WTC11 (cell line): ENCODE measurements at regions of chr3 and their contacts with region 1.

Region 1: GRCh38 chr3:49454458-49454857 is 15.6 kb upstream of the DAG1 start:
- DNase-seq: peak; percentile 76
- ATAC-seq: peak; percentile 92
- H3K4me3 Mint-ChIP-seq: no peak overlapping the region
- H3K27ac Mint-ChIP-seq: no peak overlapping the region
- H3K4me1 Mint-ChIP-seq: peaks cover 25% of the 10 kb centered on the region
- H3K27me3 Mint-ChIP-seq: no peaks in the 10 kb centered on the region
- CTCF ChIP-seq: no peak

Region 2: GRCh38 chr3:49171119-49171774 is 283.2 kb before region 1 on chr3 and contains the start of gene KLHDC8B:
- CTCF ChIA-PET with region 1: interaction called, 16 read pairs
- POLR2A ChIA-PET with region 1: interaction called, 6 read pairs
- DNase-seq: peak; percentile 96
- ATAC-seq: peak; percentile 85
- H3K4me3 Mint-ChIP-seq: peak within 1 kb of the TSS; percentile 82
- H3K27ac Mint-ChIP-seq: peak within 1 kb of the TSS; percentile 64
- H3K4me1 Mint-ChIP-seq: peaks cover 26% of the 10 kb centered on the region
- H3K27me3 Mint-ChIP-seq: peaks cover 20% of the 10 kb centered on the region
- CTCF ChIP-seq: peak; percentile 96
- total RNA-seq, gene KLHDC8B: 13.5 to 21.5 TPM (median 16.1 TPM) in 3 replicates

Region 3: GRCh38 chr3:49411968-49412631 is 42.4 kb before region 1 on chr3 and contains the starts of genes RHOA and TCTA:
- CTCF ChIA-PET with region 1: interaction called, 27 read pairs
- POLR2A ChIA-PET with region 1: no interaction called
- DNase-seq: peak; percentile 96
- ATAC-seq: peak; percentile 86
- H3K4me3 Mint-ChIP-seq: peak within 1 kb of the TSS; percentile 97
- H3K27ac Mint-ChIP-seq: peak within 1 kb of the TSS; percentile 98
- H3K4me1 Mint-ChIP-seq: peaks cover 41% of the 10 kb centered on the region
- H3K27me3 Mint-ChIP-seq: no peaks in the 10 kb centered on the region
- CTCF ChIP-seq: no peak
- total RNA-seq, gene RHOA: 367 to 398 TPM (median 389 TPM) in 3 replicates
- total RNA-seq, gene TCTA: 10.1 to 11.9 TPM (median 11.5 TPM) in 3 replicates

Region 4: DNA sequence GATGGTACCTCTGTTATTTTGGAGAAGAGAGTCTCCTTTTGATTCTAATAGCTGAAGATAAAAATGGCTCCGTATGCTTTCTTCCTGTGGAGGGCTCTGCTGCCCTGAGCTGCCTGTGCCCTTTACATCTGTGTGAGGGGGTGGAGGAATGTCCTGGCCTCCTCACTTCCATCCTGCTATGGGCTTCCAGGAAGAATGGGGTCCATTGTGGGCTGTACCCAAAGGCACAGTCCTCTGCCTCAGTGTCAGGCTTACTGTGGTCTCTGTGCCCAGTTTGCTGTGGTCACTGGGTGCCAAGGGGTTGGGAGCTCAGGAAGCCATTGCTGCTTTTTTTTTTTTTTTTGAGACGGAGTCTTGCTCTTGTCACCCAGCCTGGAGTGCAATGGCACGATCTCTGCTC is 30.0 kb after region 1 on chr3:
- CTCF ChIA-PET with region 1: interaction called, 15 read pairs
- POLR2A ChIA-PET with region 1: interaction called, 3 read pairs
- DNase-seq: no peak
- ATAC-seq: peak; percentile 33; the same call in 1 of the 2 replicates
- H3K4me3 Mint-ChIP-seq: no peak overlapping the region
- H3K27ac Mint-ChIP-seq: peak overlapping the region; percentile 78; the same call in 1 of the 2 replicates
- H3K4me1 Mint-ChIP-seq: peaks cover 18% of the 10 kb centered on the region
- H3K27me3 Mint-ChIP-seq: no peaks in the 10 kb centered on the region
- CTCF ChIP-seq: no peak

Region 5: GRCh38 chr3:49523756-49524747 is 69.6 kb after region 1 on chr3:
- CTCF ChIA-PET with region 1: interaction called, 12 read pairs
- POLR2A ChIA-PET with region 1: no interaction called
- DNase-seq: no peak
- ATAC-seq: no peak
- H3K4me3 Mint-ChIP-seq: no peak overlapping the region
- H3K27ac Mint-ChIP-seq: peak overlapping the region; percentile 85
- H3K4me1 Mint-ChIP-seq: 0 out of 2 replicates have a peak, but pooled peaks cover 6% of the 10 kb centered on the region
- H3K27me3 Mint-ChIP-seq: no peaks in the 10 kb centered on the region
- CTCF ChIP-seq: no peak

Region 6: DNA sequence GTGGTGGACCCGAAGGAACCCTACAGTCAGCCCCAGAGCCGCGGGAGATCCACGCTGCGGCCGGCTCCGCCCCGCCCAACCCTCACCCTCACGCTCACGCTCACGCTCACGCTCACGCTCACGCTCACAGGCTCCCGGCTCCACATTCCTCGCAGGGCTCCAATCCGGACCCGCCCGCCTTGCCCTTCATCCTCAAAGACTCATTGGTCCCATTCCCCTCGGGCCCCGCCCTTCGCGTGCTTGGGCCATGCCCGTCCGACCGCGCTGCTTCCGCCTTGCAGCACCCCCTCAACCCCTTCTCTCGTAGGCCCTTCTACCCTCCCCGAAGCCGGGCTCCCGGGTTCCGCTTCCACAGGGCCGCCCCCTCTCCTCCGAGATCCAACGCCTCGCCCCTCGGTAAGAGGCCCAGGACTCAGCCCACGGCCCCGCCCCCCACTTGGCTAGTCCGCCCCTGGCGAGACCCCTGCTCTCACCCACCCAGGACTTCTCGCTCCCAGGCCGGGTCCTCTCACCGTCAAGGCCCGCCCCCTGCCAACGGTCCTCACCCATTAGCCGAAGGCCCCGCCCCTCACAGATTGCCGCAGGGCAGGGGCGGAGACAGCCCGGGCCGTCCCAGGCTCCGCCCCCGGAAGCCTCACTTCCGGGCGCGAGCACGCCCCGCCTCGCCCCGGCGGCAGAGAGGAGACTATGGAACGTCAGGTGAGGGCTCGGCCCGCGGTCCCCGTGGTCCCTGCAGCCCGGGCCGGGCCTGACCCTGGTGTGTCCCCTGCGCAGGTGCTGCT is 219.4 kb after region 1 on chr3 and contains the start of gene APEH:
- CTCF ChIA-PET with region 1: interaction called, 27 read pairs
- POLR2A ChIA-PET with region 1: no interaction called
- DNase-seq: peak; percentile 98
- ATAC-seq: peak; percentile 85
- H3K4me3 Mint-ChIP-seq: peak within 1 kb of the TSS; percentile 81
- H3K27ac Mint-ChIP-seq: peak within 1 kb of the TSS; percentile 94
- H3K4me1 Mint-ChIP-seq: peaks cover 21% of the 10 kb centered on the region
- H3K27me3 Mint-ChIP-seq: no peaks in the 10 kb centered on the region
- CTCF ChIP-seq: no peak
- total RNA-seq, gene APEH: 270 to 276 TPM (median 273 TPM) in 3 replicates